ENCODE measurements at regions of chr17 and their contacts with region 1.

Region 1: DNA sequence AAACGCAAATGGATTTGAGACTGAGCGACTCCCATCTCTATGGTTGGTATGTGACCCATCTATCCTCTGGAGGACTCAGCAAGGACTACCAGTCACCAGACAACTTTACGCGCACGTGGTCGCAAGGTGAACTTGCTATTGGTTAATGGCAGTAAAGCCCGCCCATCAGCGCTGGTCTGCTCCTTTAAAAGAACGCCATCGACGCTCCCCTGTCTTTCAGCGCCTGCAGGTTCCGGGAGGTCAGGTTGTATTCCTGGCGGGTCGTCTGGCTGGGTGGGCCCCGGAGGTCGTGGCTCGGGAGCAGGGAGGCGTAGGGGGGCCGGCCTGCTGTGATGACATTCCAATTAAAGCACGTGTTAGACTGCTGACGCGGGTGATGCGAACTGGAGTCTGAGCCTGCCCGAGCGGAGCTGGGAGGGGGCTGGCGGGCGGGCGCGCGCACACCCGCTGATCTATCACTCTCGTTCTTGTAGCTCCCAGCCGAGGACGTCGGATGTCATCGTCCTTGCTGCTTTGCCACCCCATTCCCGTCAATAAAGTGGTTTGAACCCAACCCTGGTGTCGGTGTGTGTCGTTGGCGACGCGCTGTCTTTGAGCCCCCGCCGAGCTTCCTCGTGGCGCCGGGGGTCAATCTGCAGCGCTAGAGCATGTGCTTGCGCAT is 15.9 kb upstream of the ERN1 start:
- DNase-seq: peak; percentile 91 to 93
- H3K4me3 ChIP-seq: peak overlapping the region; percentile 79 to 91 (median 82)
- H3K27ac ChIP-seq: peak overlapping the region; percentile 95
- H3K4me1 ChIP-seq: peaks cover 0 to 9% (median 3%) of the 10 kb centered on the region in 4 experiments; a peak in 5 of 7 replicates
- H3K27me3 ChIP-seq: no peaks in the 10 kb centered on the region
- CTCF ChIP-seq: no peak
- EP300 ChIP-seq: no peak; a peak in 1 of 3 replicates
- POLR2A ChIP-seq: peak; percentile 98 to 100
- RAD21 ChIP-seq: no peak

Region 2: GRCh38 chr17:63390090-63390489 is 755.8 kb before region 1 on chr17:
- CTCF ChIA-PET with region 1: no interaction called
- POLR2A ChIA-PET with region 1: no interaction called
- DNase-seq: no peak
- H3K4me3 ChIP-seq: no peak overlapping the region
- H3K27ac ChIP-seq: no peak overlapping the region
- H3K4me1 ChIP-seq: no peaks in the 10 kb centered on the region
- H3K27me3 ChIP-seq: no peaks in the 10 kb centered on the region
- CTCF ChIP-seq: no peak
- EP300 ChIP-seq: no peak
- POLR2A ChIP-seq: no peak
- RAD21 ChIP-seq: no peak

Region 3: GRCh38 chr17:64041912-64042311 is 104.0 kb before region 1 on chr17:
- CTCF ChIA-PET with region 1: no interaction called
- POLR2A ChIA-PET with region 1: interaction called, 12 read pairs
- DNase-seq: no peak
- H3K4me3 ChIP-seq: no peak overlapping the region
- H3K27ac ChIP-seq: no peak overlapping the region
- H3K4me1 ChIP-seq: no peaks in the 10 kb centered on the region
- H3K27me3 ChIP-seq: no peaks in the 10 kb centered on the region
- CTCF ChIP-seq: no peak
- EP300 ChIP-seq: no peak
- POLR2A ChIP-seq: no peak
- RAD21 ChIP-seq: no peak

Region 4: DNA sequence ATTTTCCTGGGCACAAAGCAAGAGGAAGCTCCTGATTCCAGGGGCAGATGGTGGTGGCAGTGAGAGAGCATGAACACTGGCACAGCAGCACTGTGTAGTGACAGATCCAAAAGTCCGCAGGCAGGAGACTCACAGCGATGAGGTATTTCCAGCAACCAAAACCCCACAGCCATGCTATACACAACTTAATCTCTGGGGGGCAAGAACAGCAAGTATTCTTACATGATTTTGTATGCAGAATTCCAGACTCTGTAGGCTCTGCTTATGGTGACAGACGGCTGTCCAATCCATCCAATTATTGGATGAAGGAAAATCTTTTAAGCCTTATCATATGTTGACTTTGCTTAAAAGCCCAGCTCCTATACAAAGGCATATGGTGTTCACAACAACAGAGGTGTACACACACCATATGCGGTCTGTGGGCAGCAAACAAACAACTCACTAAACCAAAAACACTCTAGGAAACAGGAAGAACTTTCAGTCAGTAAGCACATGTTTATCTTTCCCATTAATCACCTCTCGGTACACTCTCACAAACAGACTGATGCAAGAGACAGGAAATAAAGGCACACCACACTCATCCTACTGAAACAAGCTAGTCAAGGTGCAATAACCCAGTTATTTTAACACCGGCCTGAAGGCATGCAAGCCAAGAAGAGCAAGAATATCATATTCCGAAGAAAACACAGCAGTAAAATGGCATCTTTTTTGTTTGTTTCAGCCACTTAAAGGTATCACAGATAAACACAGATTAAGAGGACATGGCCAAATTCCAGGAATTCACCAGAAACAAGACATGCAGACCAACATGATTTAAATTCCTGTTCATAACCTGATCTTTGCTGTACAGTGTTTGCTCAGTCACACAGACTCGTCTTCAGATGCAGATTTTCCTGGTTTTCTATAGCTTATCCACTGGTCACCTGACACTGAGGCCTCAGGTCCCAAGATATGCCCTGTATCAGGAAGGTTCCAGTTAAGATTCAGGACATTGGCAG is 63.8 kb before region 1 on chr17:
- CTCF ChIA-PET with region 1: interaction called, 3 read pairs
- POLR2A ChIA-PET with region 1: interaction called, 17 read pairs
- DNase-seq: no peak
- H3K4me3 ChIP-seq: no peak overlapping the region
- H3K27ac ChIP-seq: no peak overlapping the region
- H3K4me1 ChIP-seq: peaks cover 0 to 7% (median 0%) of the 10 kb centered on the region in 4 experiments; a peak in 2 of 7 replicates
- H3K27me3 ChIP-seq: no peaks in the 10 kb centered on the region
- CTCF ChIP-seq: no peak
- EP300 ChIP-seq: no peak
- POLR2A ChIP-seq: no peak
- RAD21 ChIP-seq: no peak

Region 5: DNA sequence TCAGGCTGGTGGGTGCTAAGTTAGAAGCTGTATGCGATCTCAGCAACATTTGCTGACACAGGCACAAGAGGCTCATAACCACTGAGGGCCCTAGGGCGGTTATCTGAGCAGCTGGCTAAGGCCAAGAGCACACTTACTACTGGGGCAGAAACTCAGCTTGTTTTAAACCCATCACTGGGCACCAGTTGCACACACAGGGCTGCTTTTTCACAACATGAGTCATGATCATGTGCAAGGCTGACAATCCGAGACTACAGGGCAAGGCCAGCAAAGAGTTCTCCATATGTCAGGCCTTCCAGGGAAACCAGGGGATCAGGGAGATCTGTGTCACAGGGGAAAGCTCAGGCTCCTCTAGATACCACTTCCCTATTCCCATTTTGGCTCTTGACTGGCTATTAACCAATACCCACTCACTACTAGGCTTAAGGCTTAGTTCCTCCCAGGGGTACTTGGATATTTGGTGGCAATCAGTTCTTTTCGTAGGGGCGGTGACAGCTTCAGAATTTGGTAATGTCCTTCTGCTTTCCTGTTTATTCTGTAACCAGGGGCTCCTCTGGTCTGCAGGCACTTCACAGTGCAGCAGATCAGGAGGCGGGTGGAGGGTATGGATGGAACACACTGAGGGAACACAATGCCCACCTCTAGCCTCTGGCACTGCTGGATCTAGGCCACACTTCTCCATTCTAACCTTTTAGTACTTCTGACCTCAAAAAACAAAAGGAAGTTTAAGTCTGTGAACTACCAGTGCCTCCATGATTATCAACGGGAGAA is 29.0 kb after region 1 on chr17:
- CTCF ChIA-PET with region 1: no interaction called
- POLR2A ChIA-PET with region 1: interaction called, 193 read pairs
- DNase-seq: no peak
- H3K4me3 ChIP-seq: no peak overlapping the region
- H3K27ac ChIP-seq: no peak overlapping the region
- H3K4me1 ChIP-seq: no peaks in the 10 kb centered on the region
- H3K27me3 ChIP-seq: no peaks in the 10 kb centered on the region
- CTCF ChIP-seq: no peak
- EP300 ChIP-seq: no peak
- POLR2A ChIP-seq: no peak
- RAD21 ChIP-seq: no peak

Region 6: GRCh38 chr17:64230795-64231408 is 85.0 kb after region 1 on chr17:
- CTCF ChIA-PET with region 1: interaction called, 5 read pairs
- POLR2A ChIA-PET with region 1: interaction called, 11 read pairs
- DNase-seq: no peak
- H3K4me3 ChIP-seq: no peak overlapping the region
- H3K27ac ChIP-seq: no peak overlapping the region
- H3K4me1 ChIP-seq: peaks cover 0 to 6% (median 1%) of the 10 kb centered on the region in 4 experiments; a peak in 3 of 7 replicates
- H3K27me3 ChIP-seq: no peaks in the 10 kb centered on the region
- CTCF ChIP-seq: no peak
- EP300 ChIP-seq: no peak
- POLR2A ChIP-seq: no peak
- RAD21 ChIP-seq: no peak

Region 7: DNA sequence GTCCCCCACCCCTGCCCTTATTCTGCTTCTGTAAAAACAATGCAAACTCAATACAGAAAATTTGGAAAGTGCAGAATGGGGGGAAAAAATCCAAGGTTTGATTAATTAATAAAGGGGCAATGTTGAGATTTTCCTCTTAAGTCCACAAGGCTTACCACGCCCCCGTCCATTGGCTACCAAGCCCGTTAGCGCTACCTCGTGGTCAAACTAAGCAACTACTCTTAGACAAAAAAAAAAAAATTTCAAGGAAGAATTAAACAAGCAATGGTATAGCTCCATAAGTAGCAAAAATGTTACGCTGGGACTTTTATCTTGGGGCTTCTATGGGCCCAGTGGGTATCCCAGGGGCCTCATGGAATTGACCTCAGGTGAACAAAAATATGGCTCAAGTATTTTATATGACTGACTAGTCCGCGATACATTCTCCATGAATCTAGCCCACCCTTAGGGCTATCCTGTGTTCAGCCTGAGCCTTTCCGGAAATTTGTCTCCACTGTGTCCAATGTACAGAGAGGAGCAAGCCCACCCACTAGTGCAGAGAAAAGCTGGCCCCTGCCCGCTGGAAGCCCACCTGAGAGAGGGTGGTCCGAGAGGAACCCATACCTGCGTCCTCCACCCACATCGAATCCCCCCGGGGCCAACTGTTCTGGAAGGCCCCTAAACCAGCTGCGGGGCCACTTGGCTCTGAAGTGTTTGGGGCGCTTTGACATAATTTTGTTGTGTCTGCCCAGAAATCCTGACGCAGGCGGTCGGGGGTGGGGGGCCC is 136.3 kb after region 1 on chr17:
- CTCF ChIA-PET with region 1: interaction called, 11 read pairs
- POLR2A ChIA-PET with region 1: interaction called, 29 read pairs
- DNase-seq: peak in 1 of 2 experiments; percentile 62
- H3K4me3 ChIP-seq: no peak overlapping the region
- H3K27ac ChIP-seq: no peak overlapping the region
- H3K4me1 ChIP-seq: no peaks in the 10 kb centered on the region
- H3K27me3 ChIP-seq: no peaks in the 10 kb centered on the region
- CTCF ChIP-seq: peak; percentile 50 to 90 (median 61)
- EP300 ChIP-seq: no peak
- POLR2A ChIP-seq: no peak
- RAD21 ChIP-seq: peak; percentile 91